ENCODE measurements at regions of chr2 and their contacts with region 1.

Region 1: GRCh38 chr2:172131713-172132555 is 29.2 kb upstream of the DLX2 start:
- DNase-seq: no peak
- H3K4me3 ChIP-seq: no peak overlapping the region
- H3K4me3 Mint-ChIP-seq: no peak overlapping the region
- H3K27ac ChIP-seq: no peak overlapping the region
- H3K27ac Mint-ChIP-seq: no peak overlapping the region
- H3K4me1 ChIP-seq: no peaks in the 10 kb centered on the region
- H3K4me1 Mint-ChIP-seq: no peaks in the 10 kb centered on the region
- H3K27me3 ChIP-seq: no peaks in the 10 kb centered on the region
- H3K27me3 Mint-ChIP-seq: peaks cover 4 to 12% of the 10 kb centered on the region in 2 donors

Region 2: GRCh38 chr2:171452773-171453172 is 679.2 kb before region 1 on chr2:
- CTCF ChIA-PET with region 1: no interaction called
- POLR2A ChIA-PET with region 1: no interaction called
- intact Hi-C with region 1: no loop called
- DNase-seq: no peak
- H3K4me3 ChIP-seq: no peak overlapping the region
- H3K4me3 Mint-ChIP-seq: no peak overlapping the region
- H3K27ac ChIP-seq: no peak overlapping the region
- H3K27ac Mint-ChIP-seq: no peak overlapping the region
- H3K4me1 ChIP-seq: no peaks in the 10 kb centered on the region
- H3K4me1 Mint-ChIP-seq: peaks cover 0 to 7% (median 4%) of the 10 kb centered on the region in 4 donors
- H3K27me3 ChIP-seq: no peaks in the 10 kb centered on the region
- H3K27me3 Mint-ChIP-seq: no peaks in the 10 kb centered on the region

Region 3: GRCh38 chr2:172116107-172116506 is 15.8 kb before region 1 on chr2:
- CTCF ChIA-PET with region 1: interaction called, 10 read pairs
- POLR2A ChIA-PET with region 1: no interaction called
- intact Hi-C with region 1: no loop called
- DNase-seq: no peak
- H3K4me3 ChIP-seq: no peak overlapping the region
- H3K4me3 Mint-ChIP-seq: no peak overlapping the region
- H3K27ac ChIP-seq: no peak overlapping the region
- H3K27ac Mint-ChIP-seq: no peak overlapping the region
- H3K4me1 ChIP-seq: no peaks in the 10 kb centered on the region
- H3K4me1 Mint-ChIP-seq: no peaks in the 10 kb centered on the region
- H3K27me3 ChIP-seq: no peaks in the 10 kb centered on the region
- H3K27me3 Mint-ChIP-seq: peaks cover 20 to 36% of the 10 kb centered on the region in 2 donors

Region 4: DNA sequence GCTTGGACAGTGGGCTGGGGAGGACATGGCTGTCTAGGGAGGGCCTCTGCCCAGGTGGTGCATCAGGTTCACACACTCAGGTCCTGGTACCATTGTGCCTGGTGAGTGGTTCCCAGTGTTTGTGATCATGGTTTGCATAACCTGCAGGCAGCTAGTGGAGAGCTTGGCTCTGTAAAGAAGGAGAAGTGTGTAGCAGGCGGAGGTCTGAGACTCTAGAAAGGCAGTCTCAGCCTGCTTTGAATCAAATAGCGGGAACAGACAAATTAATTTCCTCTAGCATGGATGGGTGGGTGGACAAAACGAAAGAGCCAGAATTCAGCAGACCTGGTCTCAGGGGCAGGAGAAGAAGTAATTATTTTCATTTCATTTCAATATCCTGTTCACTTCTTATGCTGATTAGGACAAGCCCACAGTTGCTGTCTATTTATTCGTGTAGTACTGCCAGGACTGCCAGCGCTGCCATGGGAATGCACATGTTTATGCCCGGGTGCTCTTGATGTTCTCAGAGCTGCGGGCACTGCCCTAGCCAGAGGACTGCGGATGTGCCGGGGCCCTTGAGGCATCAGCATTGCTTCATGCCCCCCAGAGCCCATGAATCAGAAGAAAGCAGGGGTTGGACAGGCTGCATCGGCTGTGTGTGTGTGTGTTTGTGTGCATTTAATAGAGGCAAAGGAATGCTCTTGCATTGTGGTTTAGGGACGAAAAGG is 16.2 kb after region 1 on chr2:
- CTCF ChIA-PET with region 1: no interaction called
- POLR2A ChIA-PET with region 1: no interaction called
- intact Hi-C with region 1: no loop called
- DNase-seq: no peak
- H3K4me3 ChIP-seq: no peak overlapping the region
- H3K4me3 Mint-ChIP-seq: no peak overlapping the region
- H3K27ac ChIP-seq: no peak overlapping the region
- H3K27ac Mint-ChIP-seq: no peak overlapping the region
- H3K4me1 ChIP-seq: peaks cover 2% of the 10 kb centered on the region
- H3K4me1 Mint-ChIP-seq: peaks cover 1 to 7% (median 2%) of the 10 kb centered on the region in 4 donors
- H3K27me3 ChIP-seq: no peaks in the 10 kb centered on the region
- H3K27me3 Mint-ChIP-seq: peaks cover 3 to 22% of the 10 kb centered on the region in 2 donors